ENCODE measurements at regions of chr4 and their contacts with region 1.

Region 1: GRCh38 chr4:83455281-83456129 is at the starts of genes HELQ and MRPS18C:
- DNase-seq: peak; percentile 87 to 98 (median 95)

Region 2: GRCh38 chr4:83284193-83285054 is 171.1 kb before region 1 on chr4 and contains the start of gene COQ2:
- intact Hi-C with region 1: loop called (anchors 10 kb)
- DNase-seq: peak; percentile 91 to 99 (median 97)

Region 3: GRCh38 chr4:83484500-83485461 is 29.3 kb after region 1 on chr4 and contains the start of gene ABRAXAS1:
- intact Hi-C with region 1: loop called (anchors 2 kb)
- DNase-seq: peak; percentile 83 to 98 (median 95)